ENCODE measurements at regions of chr4 and their contacts with region 1.

Region 1: GRCh38 chr4:151004222-151004621 is 10.9 kb downstream of the LRBA start:
- DNase-seq: no peak
- ATAC-seq: no peak
- H3K4me3 ChIP-seq: no peak overlapping the region
- H3K4me3 Mint-ChIP-seq: no peak overlapping the region
- H3K27ac ChIP-seq: no peak overlapping the region
- H3K27ac Mint-ChIP-seq: no peak overlapping the region
- H3K4me1 ChIP-seq: peaks cover 0 to 37% of the 10 kb centered on the region in 2 experiments
- H3K4me1 Mint-ChIP-seq: peaks cover 60 to 62% (median 61%) of the 10 kb centered on the region in 3 donors
- H3K27me3 ChIP-seq: no peaks in the 10 kb centered on the region
- H3K27me3 Mint-ChIP-seq: no peaks in the 10 kb centered on the region

Region 2: GRCh38 chr4:152398060-152398459 is 1393.8 kb after region 1 on chr4:
- CTCF ChIA-PET with region 1: no interaction called
- POLR2A ChIA-PET with region 1: interaction called in 1 of 2 experiments, 10 read pairs
- DNase-seq: peak in 1 of 35 experiments; percentile 13
- ATAC-seq: no peak
- H3K4me3 ChIP-seq: no peak overlapping the region
- H3K4me3 Mint-ChIP-seq: no peak overlapping the region
- H3K27ac ChIP-seq: no peak overlapping the region
- H3K27ac Mint-ChIP-seq: no peak overlapping the region
- H3K4me1 ChIP-seq: peaks cover 6 to 9% of the 10 kb centered on the region in 2 experiments
- H3K4me1 Mint-ChIP-seq: peaks cover 21 to 51% (median 43%) of the 10 kb centered on the region in 3 donors
- H3K27me3 ChIP-seq: no peaks in the 10 kb centered on the region
- H3K27me3 Mint-ChIP-seq: no peaks in the 10 kb centered on the region

Region 3: DNA sequence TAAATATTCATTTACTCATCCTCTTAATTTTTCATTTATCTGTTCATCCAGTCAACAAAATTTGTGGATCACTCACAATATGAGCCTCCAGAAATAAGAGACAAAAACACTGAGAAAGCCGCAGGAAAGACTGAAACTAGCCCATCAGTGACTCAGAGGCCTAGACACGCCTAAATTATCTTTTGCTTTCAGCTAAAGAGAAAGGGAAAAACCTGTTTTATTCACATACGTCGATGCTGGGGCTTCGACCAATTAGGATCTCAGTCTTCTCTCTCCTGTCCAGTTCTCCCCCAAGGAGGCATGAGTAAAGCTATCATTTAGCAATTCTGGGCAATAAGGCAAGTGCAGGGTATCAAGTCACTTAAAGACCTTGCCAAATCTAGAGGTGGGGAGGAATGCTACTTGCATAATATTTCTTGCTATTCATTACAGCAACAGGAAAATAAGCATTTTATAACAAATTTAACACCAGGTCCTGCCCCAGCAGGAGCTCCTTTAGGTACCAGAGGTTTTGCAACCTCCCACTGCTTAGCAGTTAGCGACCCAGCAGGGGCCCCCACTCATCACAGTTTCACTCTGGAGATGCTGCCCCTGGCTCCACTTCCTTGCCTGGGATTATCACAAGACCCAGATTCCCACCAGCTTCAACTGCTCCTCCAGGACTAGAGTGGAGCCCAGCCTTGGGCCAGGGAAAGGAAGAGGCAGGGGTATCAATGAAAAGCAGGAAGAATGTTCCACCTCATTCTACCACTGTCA is 1705.6 kb after region 1 on chr4:
- CTCF ChIA-PET with region 1: no interaction called
- POLR2A ChIA-PET with region 1: interaction called in 1 of 2 experiments, 11 read pairs
- DNase-seq: no peak
- ATAC-seq: no peak
- H3K4me3 ChIP-seq: no peak overlapping the region
- H3K4me3 Mint-ChIP-seq: no peak overlapping the region
- H3K27ac ChIP-seq: no peak overlapping the region
- H3K27ac Mint-ChIP-seq: no peak overlapping the region
- H3K4me1 ChIP-seq: no peaks in the 10 kb centered on the region
- H3K4me1 Mint-ChIP-seq: no peaks in the 10 kb centered on the region
- H3K27me3 ChIP-seq: no peaks in the 10 kb centered on the region
- H3K27me3 Mint-ChIP-seq: peaks cover 2 to 4% of the 10 kb centered on the region in 2 donors